Activated CD4-positive, alpha-beta memory T cell treated with anti-CD3 and anti-CD28 coated beads for 36 hours (primary cell): ENCODE measurements at regions of chr7 and their contacts with region 1.

Region 1: DNA sequence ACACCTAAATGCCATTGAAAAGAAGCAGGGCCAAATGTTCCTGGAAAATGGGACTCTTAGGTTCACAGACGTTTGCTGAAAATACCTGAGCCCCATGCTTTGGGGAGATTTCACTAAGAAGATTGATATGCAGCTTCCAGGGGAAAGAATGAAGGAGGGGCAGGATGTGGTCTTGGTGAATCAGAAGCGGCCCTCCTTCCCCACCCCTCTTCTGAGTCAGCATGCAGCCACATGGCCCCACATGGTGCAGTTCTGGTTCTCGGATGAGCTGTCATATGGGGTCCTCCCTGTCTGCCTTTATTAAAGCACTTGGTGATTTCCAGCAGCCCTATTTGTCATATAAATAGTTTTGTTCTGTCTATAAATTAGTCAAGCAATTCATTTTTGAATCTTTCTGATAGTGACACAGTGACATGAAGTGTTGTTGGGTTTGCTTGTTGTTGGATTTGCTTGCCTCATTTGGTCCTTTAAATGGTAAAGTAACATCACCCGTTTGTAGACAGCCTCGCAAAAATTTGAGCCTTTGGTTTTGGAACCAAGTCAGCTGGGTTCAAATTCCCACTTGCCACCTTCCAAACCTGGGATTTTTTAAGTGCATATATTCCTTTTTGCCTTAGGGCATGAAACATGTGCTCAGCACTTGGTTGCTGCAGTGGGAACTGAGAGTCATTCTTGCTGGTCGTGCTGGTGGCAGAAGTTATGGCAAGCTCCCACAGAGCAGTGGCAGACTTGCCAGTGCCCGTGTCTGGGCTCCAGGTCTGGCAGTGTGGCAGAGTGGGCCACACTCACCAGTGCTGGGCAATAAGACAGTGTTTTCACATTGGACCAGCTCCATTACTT is 68.1 kb upstream of the CDK6 start:
- DNase-seq: peak; percentile 95
- H3K4me3 Mint-ChIP-seq: peak overlapping the region; percentile 29
- H3K27ac Mint-ChIP-seq: peak overlapping the region; percentile 88
- H3K4me1 Mint-ChIP-seq: peaks cover 31% of the 10 kb centered on the region
- H3K27me3 Mint-ChIP-seq: no peaks in the 10 kb centered on the region

Region 2: GRCh38 chr7:90900628-90901356 is 2003.7 kb before region 1 on chr7:
- CTCF ChIA-PET with region 1: no interaction called
- POLR2A ChIA-PET with region 1: no interaction called
- intact Hi-C with region 1: no loop called
- DNase-seq: no peak
- H3K4me3 Mint-ChIP-seq: no peak overlapping the region
- H3K27ac Mint-ChIP-seq: no peak overlapping the region
- H3K4me1 Mint-ChIP-seq: no peaks in the 10 kb centered on the region
- H3K27me3 Mint-ChIP-seq: no peaks in the 10 kb centered on the region

Region 3: DNA sequence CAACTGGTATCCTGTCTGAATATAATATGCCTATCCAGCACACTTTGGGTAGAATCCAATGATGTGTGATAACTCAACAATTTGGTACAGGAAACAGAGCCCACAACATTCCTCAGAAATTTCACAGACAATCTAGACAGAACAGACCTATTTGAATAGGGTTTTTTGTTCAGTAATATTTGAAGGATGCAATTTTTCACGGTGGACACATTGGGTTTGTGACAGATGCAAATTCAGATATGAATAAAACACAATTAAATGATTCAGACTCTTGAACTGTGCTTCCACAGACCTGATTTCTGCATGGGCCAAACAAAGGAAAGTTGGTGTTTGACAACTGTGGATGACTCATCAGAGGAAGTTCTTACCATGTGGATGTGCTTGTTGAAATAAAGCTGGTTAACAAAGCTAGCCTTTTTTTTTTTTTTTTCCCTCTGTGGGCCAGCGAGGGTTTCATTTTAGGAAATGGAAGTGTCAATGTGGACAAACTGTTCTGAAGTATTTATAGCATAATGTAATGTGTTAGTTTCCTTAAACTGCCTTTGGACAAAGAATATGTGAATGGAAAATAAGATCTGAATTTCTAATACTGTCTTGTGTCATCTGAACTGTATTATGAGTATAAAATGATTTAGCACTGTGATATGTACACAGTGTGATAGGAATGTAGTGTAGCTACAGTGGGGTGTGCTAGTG is 271.2 kb before region 1 on chr7:
- CTCF ChIA-PET with region 1: no interaction called
- POLR2A ChIA-PET with region 1: interaction called, 5 read pairs
- intact Hi-C with region 1: loop called (anchors 1 kb)
- DNase-seq: peak; percentile 53
- H3K4me3 Mint-ChIP-seq: peak overlapping the region; percentile 36
- H3K27ac Mint-ChIP-seq: peak overlapping the region; percentile 93
- H3K4me1 Mint-ChIP-seq: peaks cover 81% of the 10 kb centered on the region
- H3K27me3 Mint-ChIP-seq: no peaks in the 10 kb centered on the region

Region 4: DNA sequence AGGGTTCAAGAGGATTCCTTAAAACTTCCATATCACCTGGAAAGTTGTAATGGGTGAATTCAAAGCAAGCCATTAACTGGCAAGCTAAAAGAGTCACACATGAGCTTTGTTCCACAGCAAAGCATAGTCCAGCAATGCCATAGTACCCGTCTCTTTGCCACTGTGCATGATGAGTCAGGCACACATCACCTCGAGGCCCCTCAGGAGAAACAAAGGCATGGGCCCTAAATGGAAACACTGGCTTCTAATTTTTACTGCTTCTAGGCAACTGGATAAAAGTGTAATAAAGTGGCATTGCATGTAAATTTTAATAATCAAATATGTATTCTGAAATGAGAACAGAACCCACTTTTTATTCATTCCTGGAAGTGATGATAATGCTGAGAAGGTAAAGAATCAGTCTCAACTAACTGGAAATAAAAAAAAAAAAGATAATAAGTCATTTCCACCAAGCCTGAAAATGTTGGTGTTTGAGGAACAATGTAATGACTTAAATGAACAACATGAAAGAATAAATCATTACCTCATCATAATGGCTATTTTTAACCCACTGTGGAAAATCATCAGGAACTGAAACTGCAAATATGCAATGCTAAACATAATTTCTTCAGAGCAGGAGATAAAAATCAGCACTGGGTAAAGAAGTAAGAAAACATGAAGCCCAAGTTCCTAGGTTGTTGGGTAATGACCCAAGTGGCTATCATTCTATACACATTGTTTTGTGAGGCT is 173.0 kb before region 1 on chr7:
- CTCF ChIA-PET with region 1: no interaction called
- POLR2A ChIA-PET with region 1: interaction called, 4 read pairs
- intact Hi-C with region 1: loop called (anchors 1 kb)
- DNase-seq: peak; percentile 71
- H3K4me3 Mint-ChIP-seq: peak overlapping the region; percentile 10
- H3K27ac Mint-ChIP-seq: peak overlapping the region; percentile 96
- H3K4me1 Mint-ChIP-seq: peaks cover 71% of the 10 kb centered on the region
- H3K27me3 Mint-ChIP-seq: no peaks in the 10 kb centered on the region

Region 5: DNA sequence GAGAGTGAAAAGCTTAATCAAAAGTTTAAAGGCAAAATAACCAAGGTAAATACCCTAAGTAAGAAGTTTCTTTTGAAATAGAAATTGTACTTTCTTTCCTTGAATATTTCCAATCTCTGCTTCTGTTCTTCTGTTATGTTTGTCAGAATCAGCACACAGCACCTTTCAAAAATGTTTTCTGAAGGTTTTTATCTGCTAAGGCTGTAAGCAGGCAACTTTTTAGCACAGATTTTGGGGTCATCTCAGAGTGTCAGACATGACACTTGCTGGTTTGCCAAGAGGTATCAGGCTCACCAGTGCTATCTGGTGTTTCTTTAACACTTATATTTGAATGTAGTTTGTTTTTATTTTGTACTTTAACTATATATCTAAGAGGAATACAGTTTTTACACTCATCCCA is 162.3 kb before region 1 on chr7:
- CTCF ChIA-PET with region 1: no interaction called
- POLR2A ChIA-PET with region 1: no interaction called
- intact Hi-C with region 1: no loop called
- DNase-seq: no peak
- H3K4me3 Mint-ChIP-seq: no peak overlapping the region
- H3K27ac Mint-ChIP-seq: no peak overlapping the region
- H3K4me1 Mint-ChIP-seq: peaks cover 62% of the 10 kb centered on the region
- H3K27me3 Mint-ChIP-seq: no peaks in the 10 kb centered on the region

Region 6: GRCh38 chr7:92854501-92855238 is 49.8 kb before region 1 on chr7:
- CTCF ChIA-PET with region 1: no interaction called
- POLR2A ChIA-PET with region 1: interaction called, 6 read pairs
- intact Hi-C with region 1: loop called (anchors 1 kb)
- DNase-seq: peak; percentile 46
- H3K4me3 Mint-ChIP-seq: no peak overlapping the region
- H3K27ac Mint-ChIP-seq: peak overlapping the region; percentile 0
- H3K4me1 Mint-ChIP-seq: peaks cover 16% of the 10 kb centered on the region
- H3K27me3 Mint-ChIP-seq: peaks cover 5% of the 10 kb centered on the region

Region 7: DNA sequence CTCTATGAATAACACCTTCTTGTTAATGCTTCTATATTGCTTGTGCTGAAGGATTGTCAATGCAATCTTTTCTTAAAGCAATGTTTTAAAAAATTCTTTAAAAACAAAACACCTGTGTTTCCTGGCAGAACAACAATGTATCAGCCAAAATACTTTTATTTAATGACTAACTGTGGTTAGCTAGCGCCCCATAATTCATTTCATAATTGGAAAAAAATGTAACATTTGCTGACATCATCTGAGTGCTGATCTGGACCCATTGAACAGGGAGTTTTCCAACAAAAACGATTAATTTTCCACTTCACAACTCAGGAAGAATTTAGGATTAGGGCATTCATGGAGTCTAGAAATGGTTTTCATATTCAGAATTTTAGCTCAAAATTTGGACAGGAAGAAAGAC is 69.5 kb after region 1 on chr7:
- CTCF ChIA-PET with region 1: no interaction called
- POLR2A ChIA-PET with region 1: no interaction called
- intact Hi-C with region 1: loop called (anchors 5 kb)
- DNase-seq: no peak
- H3K4me3 Mint-ChIP-seq: no peak overlapping the region
- H3K27ac Mint-ChIP-seq: no peak overlapping the region
- H3K4me1 Mint-ChIP-seq: peaks cover 19% of the 10 kb centered on the region
- H3K27me3 Mint-ChIP-seq: no peaks in the 10 kb centered on the region

Region 8: DNA sequence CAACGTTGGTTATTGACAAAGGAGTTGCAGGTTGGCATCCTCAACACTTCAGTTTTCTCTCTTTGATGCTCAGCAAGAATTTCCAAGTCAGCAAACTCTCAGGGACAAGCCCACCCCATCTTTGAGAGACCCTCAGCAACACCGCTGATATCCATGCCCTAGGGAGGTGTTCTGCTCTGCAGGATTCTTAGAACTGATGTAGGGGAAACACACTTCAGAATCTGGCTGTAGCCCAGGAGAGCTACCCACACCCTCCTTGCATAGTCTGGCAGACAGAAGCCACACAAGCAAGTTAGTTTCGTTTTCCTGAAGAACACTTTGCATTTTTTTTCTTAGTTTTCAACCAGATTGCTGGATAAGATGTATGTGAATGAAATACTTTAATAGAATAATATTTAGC is 242.9 kb after region 1 on chr7:
- CTCF ChIA-PET with region 1: interaction called, 3 read pairs
- POLR2A ChIA-PET with region 1: no interaction called
- intact Hi-C with region 1: loop called (anchors 1 kb)
- DNase-seq: peak; percentile 55
- H3K4me3 Mint-ChIP-seq: peak overlapping the region; percentile 84
- H3K27ac Mint-ChIP-seq: peak overlapping the region; percentile 82
- H3K4me1 Mint-ChIP-seq: peaks cover 27% of the 10 kb centered on the region
- H3K27me3 Mint-ChIP-seq: no peaks in the 10 kb centered on the region